CD4-positive, alpha-beta memory T cell (primary cell): ENCODE measurements at regions of chr2 and their contacts with region 1.

Region 1: DNA sequence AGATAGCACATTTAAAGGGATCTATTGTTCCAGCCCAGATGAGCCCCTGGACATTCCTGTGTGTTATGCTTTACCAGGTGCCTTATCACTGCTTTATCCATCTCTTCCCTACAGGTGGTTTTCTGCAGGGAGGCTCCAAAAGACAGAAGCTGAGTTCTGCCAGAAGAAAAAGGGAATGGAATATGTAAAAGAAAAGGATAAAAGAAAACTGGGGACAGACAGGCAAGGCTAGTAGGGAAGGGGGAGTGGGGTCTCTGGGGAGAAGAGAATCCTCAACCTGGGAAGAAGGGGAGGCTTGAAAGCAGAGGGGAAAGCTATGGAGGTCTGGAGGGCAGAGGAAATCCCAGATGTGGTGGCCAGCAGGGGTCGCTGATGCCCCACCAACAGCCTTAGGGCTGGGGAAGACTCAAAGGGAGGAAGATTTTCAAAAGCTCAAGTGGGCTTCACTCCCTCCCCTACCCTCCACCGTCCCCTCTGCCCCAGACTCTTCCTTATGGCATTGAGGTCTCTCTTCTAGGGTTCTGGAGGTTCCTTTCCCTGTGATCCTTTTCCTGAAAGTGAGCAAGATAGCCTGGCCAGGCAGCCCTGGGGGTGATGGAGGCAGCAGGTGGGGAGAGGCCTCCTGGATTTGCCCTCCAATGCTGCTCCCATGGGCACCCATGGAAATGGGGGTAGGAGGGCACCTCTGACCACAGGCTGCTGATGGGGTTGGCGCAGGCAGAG is 178.1 kb upstream of the PKDCC start:
- DNase-seq: peak; percentile 56 to 69 (median 63)
- H3K4me3 ChIP-seq: no peak overlapping the region
- H3K4me3 Mint-ChIP-seq: no peak overlapping the region
- H3K27ac ChIP-seq: no peak overlapping the region
- H3K27ac Mint-ChIP-seq: peak overlapping the region in 3 of 7 donors; percentile 22 to 49 (median 45)
- H3K4me1 ChIP-seq: peaks cover 25% of the 10 kb centered on the region
- H3K4me1 Mint-ChIP-seq: peaks cover 10 to 55% (median 27%) of the 10 kb centered on the region in 4 donors
- H3K27me3 ChIP-seq: no peaks in the 10 kb centered on the region
- H3K27me3 Mint-ChIP-seq: peaks cover 0 to 4% of the 10 kb centered on the region in 2 donors

Region 2: DNA sequence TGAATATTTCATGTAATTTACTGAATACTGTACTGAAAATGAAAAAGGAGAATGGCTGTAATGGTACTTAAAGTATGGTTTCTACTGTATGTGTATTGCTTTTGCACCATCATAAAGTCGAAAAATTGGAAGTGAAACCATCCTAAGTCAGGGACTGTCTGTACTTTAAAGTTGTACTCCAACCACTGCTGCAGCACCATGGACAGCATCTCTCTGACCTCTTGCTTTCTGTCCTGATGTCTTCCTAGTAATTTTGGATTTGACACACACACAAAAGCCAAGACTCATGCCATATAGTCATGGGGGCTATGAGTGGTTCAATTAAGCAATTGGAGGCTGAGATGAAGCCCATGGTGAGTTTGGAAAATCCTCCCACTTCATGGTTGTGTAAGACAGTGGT is 78.2 kb before region 1 on chr2:
- CTCF ChIA-PET with region 1: no interaction called
- POLR2A ChIA-PET with region 1: no interaction called
- intact Hi-C with region 1: no loop called
- DNase-seq: no peak
- H3K4me3 ChIP-seq: no peak overlapping the region
- H3K4me3 Mint-ChIP-seq: no peak overlapping the region
- H3K27ac ChIP-seq: no peak overlapping the region
- H3K27ac Mint-ChIP-seq: peak overlapping the region in 1 of 7 donors; percentile 4
- H3K4me1 ChIP-seq: no peaks in the 10 kb centered on the region
- H3K4me1 Mint-ChIP-seq: no peaks in the 10 kb centered on the region
- H3K27me3 ChIP-seq: no peaks in the 10 kb centered on the region
- H3K27me3 Mint-ChIP-seq: peaks cover 5 to 13% of the 10 kb centered on the region in 2 donors

Region 3: GRCh38 chr2:41840702-41841551 is 28.8 kb before region 1 on chr2:
- CTCF ChIA-PET with region 1: interaction called, 10 read pairs
- POLR2A ChIA-PET with region 1: interaction called, 7 read pairs
- intact Hi-C with region 1: no loop called
- DNase-seq: peak; percentile 97 to 98 (median 97)
- H3K4me3 ChIP-seq: peak overlapping the region; percentile 85 to 86
- H3K4me3 Mint-ChIP-seq: peak overlapping the region; percentile 90 to 100 (median 96)
- H3K27ac ChIP-seq: peak overlapping the region; percentile 75
- H3K27ac Mint-ChIP-seq: peak overlapping the region; percentile 85 to 98 (median 94)
- H3K4me1 ChIP-seq: peaks cover 10% of the 10 kb centered on the region
- H3K4me1 Mint-ChIP-seq: peaks cover 5 to 16% (median 11%) of the 10 kb centered on the region in 4 donors
- H3K27me3 ChIP-seq: peaks cover 3% of the 10 kb centered on the region
- H3K27me3 Mint-ChIP-seq: peaks cover 11 to 16% of the 10 kb centered on the region in 2 donors

Region 4: DNA sequence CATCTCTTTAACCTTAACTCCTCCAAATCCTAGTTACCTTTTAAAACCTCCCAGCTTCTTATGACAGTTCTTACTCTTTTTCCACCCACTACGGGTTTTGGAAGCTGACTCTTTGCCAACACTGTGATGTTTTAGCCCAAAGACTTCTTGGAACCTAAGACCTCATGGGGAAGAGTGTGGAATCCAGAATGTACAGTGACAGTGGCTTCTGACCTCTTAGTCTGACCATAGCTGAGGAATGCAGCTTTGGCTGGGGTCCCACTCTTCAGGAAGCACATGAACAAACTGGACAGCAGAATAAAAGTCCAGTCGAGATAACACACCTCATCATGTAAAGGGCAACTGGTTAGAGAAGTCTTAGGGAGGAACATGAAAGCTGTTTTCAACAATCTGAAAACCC is 17.1 kb after region 1 on chr2:
- CTCF ChIA-PET with region 1: interaction called, 30 read pairs
- POLR2A ChIA-PET with region 1: no interaction called
- intact Hi-C with region 1: no loop called
- DNase-seq: no peak
- H3K4me3 ChIP-seq: no peak overlapping the region
- H3K4me3 Mint-ChIP-seq: no peak overlapping the region
- H3K27ac ChIP-seq: no peak overlapping the region
- H3K27ac Mint-ChIP-seq: no peak overlapping the region
- H3K4me1 ChIP-seq: no peaks in the 10 kb centered on the region
- H3K4me1 Mint-ChIP-seq: peaks cover 0 to 1% (median 0%) of the 10 kb centered on the region in 4 donors
- H3K27me3 ChIP-seq: no peaks in the 10 kb centered on the region
- H3K27me3 Mint-ChIP-seq: peaks cover 2 to 10% of the 10 kb centered on the region in 2 donors

Region 5: GRCh38 chr2:42086500-42086953 is 216.8 kb after region 1 on chr2:
- CTCF ChIA-PET with region 1: interaction called, 357 read pairs
- POLR2A ChIA-PET with region 1: interaction called, 7 read pairs
- intact Hi-C with region 1: loop called (anchors 1 kb)
- DNase-seq: peak; percentile 57 to 65 (median 62)
- H3K4me3 ChIP-seq: no peak overlapping the region
- H3K4me3 Mint-ChIP-seq: no peak overlapping the region
- H3K27ac ChIP-seq: no peak overlapping the region
- H3K27ac Mint-ChIP-seq: peak overlapping the region in 1 of 7 donors; percentile 9
- H3K4me1 ChIP-seq: peaks cover 7% of the 10 kb centered on the region
- H3K4me1 Mint-ChIP-seq: peaks cover 6 to 19% (median 10%) of the 10 kb centered on the region in 4 donors
- H3K27me3 ChIP-seq: no peaks in the 10 kb centered on the region
- H3K27me3 Mint-ChIP-seq: peaks cover 0 to 2% of the 10 kb centered on the region in 2 donors

Region 6: GRCh38 chr2:42238644-42239288 is 369.1 kb after region 1 on chr2:
- CTCF ChIA-PET with region 1: interaction called, 6 read pairs
- POLR2A ChIA-PET with region 1: no interaction called
- intact Hi-C with region 1: loop called (anchors 2 kb)
- DNase-seq: peak; percentile 40 to 51 (median 48)
- H3K4me3 ChIP-seq: no peak overlapping the region
- H3K4me3 Mint-ChIP-seq: peak overlapping the region in 5 of 8 donors; percentile 20 to 51 (median 39)
- H3K27ac ChIP-seq: no peak overlapping the region
- H3K27ac Mint-ChIP-seq: peak overlapping the region in 6 of 7 donors; percentile 43 to 80 (median 64)
- H3K4me1 ChIP-seq: peaks cover 99% of the 10 kb centered on the region
- H3K4me1 Mint-ChIP-seq: peaks cover 64 to 92% (median 81%) of the 10 kb centered on the region in 4 donors
- H3K27me3 ChIP-seq: no peaks in the 10 kb centered on the region
- H3K27me3 Mint-ChIP-seq: no peaks in the 10 kb centered on the region

Region 7: DNA sequence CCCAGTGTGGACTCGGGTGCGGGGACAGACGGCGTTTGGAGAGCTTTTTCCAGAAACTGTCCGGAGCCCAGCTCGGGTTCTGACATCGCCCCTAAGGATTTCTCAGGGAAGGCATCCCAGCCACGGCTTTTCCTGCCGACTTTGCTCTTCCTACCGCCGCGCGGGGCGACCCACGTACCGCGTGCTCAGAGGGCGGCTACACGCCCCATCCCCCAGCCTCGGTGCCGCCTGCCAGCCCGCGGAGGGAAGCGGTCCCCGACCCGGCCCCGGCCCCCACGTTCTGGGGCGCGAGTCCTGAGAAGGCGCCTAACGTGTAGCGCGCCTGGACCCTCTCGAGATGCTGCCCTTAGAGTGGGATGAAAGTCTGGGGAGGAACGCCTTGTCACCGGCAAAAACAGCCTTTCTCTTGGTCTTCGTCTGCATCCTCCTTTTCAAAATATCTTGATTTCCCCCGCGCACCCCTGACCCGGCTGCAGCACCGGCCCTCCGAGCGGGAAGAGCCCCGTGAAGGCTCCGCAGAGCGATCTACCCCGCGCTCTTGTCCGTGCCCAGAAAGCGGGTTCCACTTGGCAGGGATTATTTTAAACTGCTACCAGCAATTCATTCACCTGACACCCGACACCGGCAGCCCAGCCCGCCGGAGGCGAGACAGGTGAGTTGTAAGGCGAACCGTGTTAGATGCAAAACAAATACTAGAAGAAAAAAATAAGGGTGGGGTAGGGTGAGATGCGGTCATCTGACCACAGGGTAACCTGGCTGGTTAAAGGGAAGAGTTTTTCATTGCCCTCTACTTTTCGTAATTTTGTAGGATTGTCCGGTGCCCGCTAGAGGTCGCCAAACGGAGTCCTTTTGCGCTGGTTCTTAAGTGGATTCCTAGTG is 624.9 kb after region 1 on chr2:
- CTCF ChIA-PET with region 1: no interaction called
- POLR2A ChIA-PET with region 1: no interaction called
- intact Hi-C with region 1: loop called (anchors 5 kb)
- DNase-seq: peak; percentile 69 to 74 (median 70)
- H3K4me3 ChIP-seq: peak overlapping the region; percentile 66 to 77
- H3K4me3 Mint-ChIP-seq: peak overlapping the region; percentile 91 to 98 (median 94)
- H3K27ac ChIP-seq: no peak overlapping the region
- H3K27ac Mint-ChIP-seq: peak overlapping the region in 5 of 7 donors; percentile 44 to 79 (median 69)
- H3K4me1 ChIP-seq: no peaks in the 10 kb centered on the region
- H3K4me1 Mint-ChIP-seq: peaks cover 2 to 15% (median 7%) of the 10 kb centered on the region in 4 donors
- H3K27me3 ChIP-seq: peaks cover 9% of the 10 kb centered on the region
- H3K27me3 Mint-ChIP-seq: peaks cover 11 to 22% of the 10 kb centered on the region in 2 donors